Activated T-helper 1 cell treated with anti-CD3 and anti-CD28 coated beads, Interleukin-12 subunit alpha, Interleukin-12 subunit beta, Interleukin-2, Interleukin-4 antibody, amounts not matched to agents 30 ng/mL and 10 ng/mL and 1 ng/mL, durations not matched to agents 14 hours and 24 hours and 36 hours (primary cell): ENCODE measurements at regions of chr2 and their contacts with region 1.

Region 1: GRCh38 chr2:242031481-242032019 is 162.0 kb downstream of the RTP5 start:
- DNase-seq: peak; percentile 46
- H3K4me3 Mint-ChIP-seq: peak overlapping the region; percentile 70
- H3K27ac Mint-ChIP-seq: peak overlapping the region; percentile 49
- H3K4me1 Mint-ChIP-seq: peaks cover 16% of the 10 kb centered on the region
- H3K27me3 Mint-ChIP-seq: peaks cover 34% of the 10 kb centered on the region

Region 2: DNA sequence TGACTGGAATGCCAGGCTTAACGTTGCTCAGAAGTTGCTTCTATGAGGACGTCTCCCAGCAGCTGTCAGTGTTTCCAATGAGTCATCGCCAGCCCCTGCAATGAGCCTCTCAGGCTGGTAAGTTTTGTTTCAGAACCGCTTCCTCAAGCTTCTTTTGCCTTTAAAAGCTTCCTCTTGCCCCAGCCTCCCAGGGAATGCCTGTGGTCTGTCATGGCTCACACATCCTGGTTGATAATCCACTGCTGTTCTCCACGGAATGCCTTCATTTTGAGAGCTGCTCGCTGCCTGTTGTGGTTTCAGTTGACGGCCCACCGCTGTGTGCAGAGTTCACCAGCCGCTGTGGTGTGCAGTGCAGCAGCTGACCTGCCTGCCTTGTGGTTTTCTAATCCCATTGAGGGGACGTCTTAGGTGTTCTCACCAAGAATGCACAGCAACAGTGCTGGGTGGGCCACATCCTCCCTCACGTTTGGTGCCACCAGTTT is 65.6 kb before region 1 on chr2:
- intact Hi-C with region 1: loop called (anchors 5 kb)
- DNase-seq: peak; percentile 21
- H3K4me3 Mint-ChIP-seq: peak overlapping the region; percentile 72
- H3K27ac Mint-ChIP-seq: peak overlapping the region; percentile 83
- H3K4me1 Mint-ChIP-seq: peaks cover 21% of the 10 kb centered on the region
- H3K27me3 Mint-ChIP-seq: no peaks in the 10 kb centered on the region

Region 3: GRCh38 chr2:241975890-241976695 is 55.5 kb before region 1 on chr2:
- intact Hi-C with region 1: no loop called
- DNase-seq: no peak
- H3K4me3 Mint-ChIP-seq: no peak overlapping the region
- H3K27ac Mint-ChIP-seq: no peak overlapping the region
- H3K4me1 Mint-ChIP-seq: no peaks in the 10 kb centered on the region
- H3K27me3 Mint-ChIP-seq: no peaks in the 10 kb centered on the region

Region 4: GRCh38 chr2:242010577-242011513 is 20.7 kb before region 1 on chr2:
- intact Hi-C with region 1: loop called (anchors 2 kb)
- DNase-seq: no peak
- H3K4me3 Mint-ChIP-seq: no peak overlapping the region
- H3K27ac Mint-ChIP-seq: peak overlapping the region; percentile 40
- H3K4me1 Mint-ChIP-seq: peaks cover 9% of the 10 kb centered on the region
- H3K27me3 Mint-ChIP-seq: peaks cover 1% of the 10 kb centered on the region